Caco-2 (cell line): ENCODE measurements at regions of chr2 and their contacts with region 1.

Region 1: GRCh38 chr2:133054297-133054696 is 384.3 kb upstream of the LYPD1 start:
- DNase-seq: no peak
- H3K4me3 ChIP-seq: no peak overlapping the region
- H3K4me3 Mint-ChIP-seq: no peak overlapping the region
- H3K27ac Mint-ChIP-seq: no peak overlapping the region
- H3K4me1 ChIP-seq: peaks cover 24% of the 10 kb centered on the region
- H3K4me1 Mint-ChIP-seq: peaks cover 11% of the 10 kb centered on the region
- H3K27me3 ChIP-seq: no peaks in the 10 kb centered on the region
- H3K27me3 Mint-ChIP-seq: no peaks in the 10 kb centered on the region
- CTCF ChIP-seq: no peak

Region 2: DNA sequence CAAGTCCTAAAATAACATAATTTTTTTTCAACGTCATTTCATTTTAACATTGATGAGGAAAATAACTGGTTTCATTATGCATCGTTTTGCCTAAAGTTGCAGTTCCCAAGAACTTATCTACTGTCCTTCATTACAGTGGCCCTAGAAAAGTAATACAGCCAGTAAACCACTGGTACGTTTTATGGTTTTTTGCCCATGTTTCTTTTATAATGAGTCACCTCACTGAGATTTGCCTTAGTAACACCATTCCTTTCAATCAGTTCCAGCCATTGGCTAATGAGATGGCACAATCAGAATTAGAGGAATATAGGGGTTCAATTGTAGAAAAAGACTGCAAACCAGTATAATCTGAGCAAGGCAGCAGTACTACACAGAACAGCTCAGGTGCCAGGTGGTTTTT is 38.3 kb after region 1 on chr2:
- CTCF ChIA-PET with region 1: no interaction called
- POLR2A ChIA-PET with region 1: no interaction called
- intact Hi-C with region 1: no loop called
- DNase-seq: no peak
- H3K4me3 ChIP-seq: no peak overlapping the region
- H3K4me3 Mint-ChIP-seq: no peak overlapping the region
- H3K27ac Mint-ChIP-seq: no peak overlapping the region
- H3K4me1 ChIP-seq: no peaks in the 10 kb centered on the region
- H3K4me1 Mint-ChIP-seq: no peaks in the 10 kb centered on the region
- H3K27me3 ChIP-seq: no peaks in the 10 kb centered on the region; the same call in 1 of the 2 replicates
- H3K27me3 Mint-ChIP-seq: no peaks in the 10 kb centered on the region
- CTCF ChIP-seq: no peak

Region 3: GRCh38 chr2:133158024-133158423 is 103.7 kb after region 1 on chr2:
- CTCF ChIA-PET with region 1: no interaction called
- POLR2A ChIA-PET with region 1: no interaction called
- intact Hi-C with region 1: loop called (anchors 1 kb)
- DNase-seq: no peak
- H3K4me3 ChIP-seq: no peak overlapping the region
- H3K4me3 Mint-ChIP-seq: no peak overlapping the region
- H3K27ac Mint-ChIP-seq: no peak overlapping the region
- H3K4me1 ChIP-seq: no peaks in the 10 kb centered on the region
- H3K4me1 Mint-ChIP-seq: no peaks in the 10 kb centered on the region
- H3K27me3 ChIP-seq: no peaks in the 10 kb centered on the region
- H3K27me3 Mint-ChIP-seq: no peaks in the 10 kb centered on the region
- CTCF ChIP-seq: no peak